ENCODE measurements at regions of chr1 and their contacts with region 1.

Region 1: GRCh38 chr1:91529856-91530255 is 29.2 kb downstream of the CDC7 start:
- DNase-seq: peak in 1 of 2 donors; percentile 54
- H3K4me3 ChIP-seq: no peak overlapping the region
- CTCF ChIP-seq: no peak
- POLR2A ChIP-seq: no peak

Region 2: GRCh38 chr1:90561911-90562310 is 967.9 kb before region 1 on chr1:
- intact Hi-C with region 1: no loop called
- DNase-seq: no peak
- H3K4me3 ChIP-seq: no peak overlapping the region
- CTCF ChIP-seq: no peak
- POLR2A ChIP-seq: no peak

Region 3: DNA sequence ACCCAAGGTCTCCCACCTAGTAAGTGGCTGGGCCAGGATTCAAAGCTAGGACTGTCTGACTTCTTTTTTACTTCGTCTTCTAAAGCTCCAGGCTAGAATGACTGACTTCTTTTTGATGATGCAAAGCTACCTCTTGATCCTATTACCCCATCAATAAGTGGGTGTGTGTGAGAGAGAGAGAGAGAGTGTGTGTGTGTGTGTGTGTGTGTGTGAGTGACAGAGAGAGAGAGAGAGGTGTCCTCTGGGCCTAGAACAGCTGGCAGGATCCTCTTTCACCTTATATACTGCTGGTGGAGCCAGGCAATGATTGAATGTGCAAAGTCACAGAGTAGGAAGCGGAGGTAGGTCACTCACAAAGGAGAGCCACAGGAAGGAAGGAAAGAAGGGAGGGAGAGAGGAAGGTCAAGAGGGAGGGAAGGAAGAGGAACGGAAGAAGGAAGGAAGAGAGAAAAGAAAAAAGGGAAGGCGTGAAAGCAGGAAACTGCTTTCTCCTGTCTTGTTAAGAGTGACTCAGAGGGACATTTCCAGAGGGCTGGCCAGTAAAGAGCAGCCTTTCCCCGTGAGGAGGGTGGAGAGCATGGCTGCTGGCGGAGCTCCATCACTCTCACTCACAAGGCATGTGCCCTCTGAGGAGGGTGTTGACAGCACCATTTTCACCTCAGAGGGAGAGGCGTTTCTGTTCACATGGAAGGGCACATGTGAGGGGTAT is 39.7 kb after region 1 on chr1:
- intact Hi-C with region 1: no loop called
- DNase-seq: peak; percentile 93 to 97
- H3K4me3 ChIP-seq: no peak overlapping the region
- CTCF ChIP-seq: no peak
- POLR2A ChIP-seq: no peak

Region 4: DNA sequence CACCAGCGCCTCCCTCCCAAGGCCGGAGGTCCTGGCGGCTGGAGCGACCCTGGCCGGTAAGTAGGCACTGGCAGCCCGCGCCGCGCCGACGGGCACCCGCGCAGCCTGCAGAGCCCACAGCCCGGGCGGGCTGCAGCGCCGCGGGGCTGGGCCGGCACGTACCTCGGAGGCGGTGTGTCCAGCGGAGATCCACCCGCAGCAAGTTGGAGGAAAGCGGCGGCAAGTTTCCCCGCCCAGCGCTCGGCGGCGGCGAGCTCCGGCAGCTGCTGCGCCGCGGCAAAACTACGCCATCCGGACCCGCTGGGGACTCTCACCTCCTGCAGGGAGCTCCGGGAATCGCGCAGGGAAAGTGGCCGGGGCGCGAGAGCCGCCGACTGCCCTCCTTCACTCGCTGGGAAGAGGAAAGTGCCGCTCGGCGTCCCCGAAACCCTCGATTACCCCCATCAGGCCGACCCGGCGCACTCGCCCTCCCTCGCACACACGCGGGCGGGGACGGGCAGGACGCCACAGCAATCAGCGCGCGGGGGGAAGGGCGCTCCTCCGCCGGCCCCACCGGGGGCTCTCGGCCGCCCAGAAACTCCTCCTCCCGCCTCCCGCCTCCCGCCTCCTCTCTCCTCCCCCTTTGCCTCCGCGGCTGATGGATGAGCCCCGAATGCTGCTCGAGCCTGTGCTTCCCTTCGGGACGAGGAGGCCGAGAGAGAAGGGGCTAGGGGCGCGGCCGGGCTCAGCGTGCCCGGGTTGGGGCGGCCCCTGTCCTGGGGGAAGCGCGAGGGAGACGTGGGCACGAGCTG is 356.1 kb after region 1 on chr1 and contains the start of gene TGFBR3:
- intact Hi-C with region 1: loop called (anchors 10 kb)
- DNase-seq: peak; percentile 89 to 98
- H3K4me3 ChIP-seq: peak within 1 kb of the TSS; percentile 98
- CTCF ChIP-seq: no peak
- POLR2A ChIP-seq: peak in 1 of 2 donors; percentile 25
- total RNA-seq, gene TGFBR3: 79.4 to 134 (median 116) TPM